A673 (cell line): ENCODE measurements at regions of chr9 and their contacts with region 1.

Region 1: DNA sequence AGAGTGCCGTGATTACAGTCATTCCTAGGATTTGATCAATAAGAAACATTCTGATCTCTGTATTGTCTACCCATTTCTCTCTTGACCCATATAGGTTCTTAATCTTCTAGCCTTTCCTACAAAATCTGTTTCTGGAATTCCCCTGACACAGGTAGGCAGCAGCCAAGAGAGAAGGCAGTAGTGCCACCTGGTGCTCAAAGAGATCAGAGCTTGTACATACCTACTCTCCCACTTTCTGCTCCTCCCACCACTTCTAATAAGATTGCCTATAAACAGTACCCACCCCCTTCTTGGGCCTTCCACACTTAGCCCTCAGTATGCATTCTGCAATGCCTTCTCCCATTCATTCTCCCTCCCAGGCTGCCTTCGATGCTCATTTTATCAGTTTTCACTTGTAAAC is 117.4 kb upstream of the RORB start:
- DNase-seq: peak; percentile 17
- H3K4me3 ChIP-seq: no peak overlapping the region
- H3K27ac ChIP-seq: no peak overlapping the region
- H3K4me1 ChIP-seq: no peaks in the 10 kb centered on the region
- H3K27me3 ChIP-seq: no peaks in the 10 kb centered on the region
- CTCF ChIP-seq: 0 out of 2 replicates have a peak, but pooled peaks have one; percentile 39

Region 2: DNA sequence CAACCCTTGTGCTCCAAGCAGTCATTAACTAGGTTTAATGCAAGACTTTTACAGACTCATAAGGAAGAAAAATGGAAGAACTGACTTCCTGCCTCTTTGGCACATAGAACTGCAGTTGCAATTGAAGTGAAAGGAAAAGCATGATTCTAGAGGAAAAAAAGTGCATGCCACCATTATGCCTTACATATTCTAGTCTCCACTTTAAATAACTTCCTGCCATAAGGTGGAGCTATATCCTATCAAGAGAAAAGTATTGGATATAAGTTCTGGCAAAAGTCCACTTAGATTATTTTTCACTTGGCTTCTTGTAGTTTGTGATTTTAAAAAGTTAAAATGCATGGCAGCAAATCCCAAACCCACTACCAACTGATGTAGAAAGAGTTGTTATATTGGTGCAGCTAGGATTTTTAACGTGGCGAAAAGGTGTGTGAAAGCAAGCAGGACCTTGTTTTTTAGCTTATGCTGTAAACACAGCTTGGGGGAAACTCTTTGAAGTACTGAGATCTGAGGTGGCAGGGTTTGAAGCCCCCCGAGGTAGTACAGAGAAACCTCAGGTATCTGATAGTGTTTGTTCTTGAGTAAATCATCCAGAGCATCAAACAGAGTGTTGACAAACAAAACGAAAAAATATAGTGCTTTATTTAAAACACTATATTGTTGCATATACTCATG is 1110.2 kb before region 1 on chr9:
- CTCF ChIA-PET with region 1: no interaction called
- POLR2A ChIA-PET with region 1: no interaction called
- intact Hi-C with region 1: loop called (anchors 10 kb)
- DNase-seq: peak; percentile 51
- H3K4me3 ChIP-seq: no peak overlapping the region
- H3K27ac ChIP-seq: no peak overlapping the region
- H3K4me1 ChIP-seq: no peaks in the 10 kb centered on the region
- H3K27me3 ChIP-seq: no peaks in the 10 kb centered on the region
- CTCF ChIP-seq: peak; percentile 60

Region 3: GRCh38 chr9:74309654-74310053 is 70.1 kb before region 1 on chr9:
- CTCF ChIA-PET with region 1: no interaction called
- POLR2A ChIA-PET with region 1: no interaction called
- intact Hi-C with region 1: loop called (anchors 10 kb)
- DNase-seq: no peak
- H3K4me3 ChIP-seq: no peak overlapping the region
- H3K27ac ChIP-seq: no peak overlapping the region
- H3K4me1 ChIP-seq: no peaks in the 10 kb centered on the region
- H3K27me3 ChIP-seq: no peaks in the 10 kb centered on the region
- CTCF ChIP-seq: no peak